A673 (cell line): ENCODE measurements at regions of chr17 and their contacts with region 1.

Region 1: GRCh38 chr17:9729034-9729650 is 62.2 kb downstream of the DHRS7C start:
- DNase-seq: peak; percentile 57
- H3K4me3 ChIP-seq: no peak overlapping the region
- H3K27ac ChIP-seq: no peak overlapping the region
- H3K4me1 ChIP-seq: no peaks in the 10 kb centered on the region
- H3K27me3 ChIP-seq: peaks cover 22% of the 10 kb centered on the region
- CTCF ChIP-seq: peak; percentile 95

Region 2: GRCh38 chr17:9750524-9750923 is 21.4 kb after region 1 on chr17:
- CTCF ChIA-PET with region 1: no interaction called
- POLR2A ChIA-PET with region 1: no interaction called
- intact Hi-C with region 1: loop called (anchors 1 kb)
- DNase-seq: no peak
- H3K4me3 ChIP-seq: no peak overlapping the region
- H3K27ac ChIP-seq: no peak overlapping the region
- H3K4me1 ChIP-seq: no peaks in the 10 kb centered on the region
- H3K27me3 ChIP-seq: peaks cover 19% of the 10 kb centered on the region
- CTCF ChIP-seq: no peak

Region 3: GRCh38 chr17:9768381-9768934 is 39.3 kb after region 1 on chr17:
- CTCF ChIA-PET with region 1: interaction called, 10 read pairs
- POLR2A ChIA-PET with region 1: no interaction called
- intact Hi-C with region 1: no loop called
- DNase-seq: peak; percentile 72
- H3K4me3 ChIP-seq: no peak overlapping the region
- H3K27ac ChIP-seq: no peak overlapping the region
- H3K4me1 ChIP-seq: no peaks in the 10 kb centered on the region
- H3K27me3 ChIP-seq: peaks cover 19% of the 10 kb centered on the region
- CTCF ChIP-seq: peak; percentile 60

Region 4: DNA sequence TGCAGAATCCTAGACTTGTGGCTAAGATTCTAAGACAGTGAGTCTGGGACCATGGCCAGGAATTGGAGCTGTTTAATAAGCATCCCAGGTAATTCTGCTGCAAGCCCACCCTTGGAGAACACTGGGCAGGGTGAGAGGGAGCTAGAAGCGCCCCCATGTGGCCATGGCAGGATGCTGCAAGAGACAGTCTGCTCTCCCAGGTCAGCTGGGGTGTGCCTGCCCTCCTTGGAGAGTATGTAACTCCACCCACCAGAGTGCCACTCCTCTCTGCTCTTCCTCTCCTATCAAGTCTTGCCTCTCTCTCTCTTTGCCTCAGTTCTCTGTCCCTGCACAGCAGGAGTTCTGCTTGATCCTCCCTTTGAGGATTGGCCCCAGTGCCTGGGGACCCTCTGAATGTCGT is 161.0 kb after region 1 on chr17:
- CTCF ChIA-PET with region 1: no interaction called
- POLR2A ChIA-PET with region 1: no interaction called
- intact Hi-C with region 1: loop called (anchors 10 kb)
- DNase-seq: peak; percentile 51
- H3K4me3 ChIP-seq: no peak overlapping the region
- H3K27ac ChIP-seq: no peak overlapping the region
- H3K4me1 ChIP-seq: no peaks in the 10 kb centered on the region
- H3K27me3 ChIP-seq: peaks cover 24% of the 10 kb centered on the region
- CTCF ChIP-seq: peak; percentile 77